ENCODE measurements at regions of chrX and their contacts with region 1.

Region 1: GRCh38 chrX:130339408-130340222 is at the start of gene SLC25A14:
- DNase-seq: peak; percentile 85
- H3K4me3 ChIP-seq: peak within 1 kb of the TSS; percentile 34 to 74 (median 62)
- H3K27ac ChIP-seq: peak within 1 kb of the TSS; percentile 14 to 70 (median 62)
- H3K4me1 ChIP-seq: no peaks in the 10 kb centered on the region
- H3K27me3 ChIP-seq: no peaks in the 10 kb centered on the region
- CTCF ChIP-seq: no peak
- EP300 ChIP-seq: no peak
- POLR2A ChIP-seq: no peak
- total RNA-seq, gene SLC25A14: 8.6 to 16.8 (median 11.6) TPM

Region 2: GRCh38 chrX:130268500-130269170 is 71.0 kb before region 1 on chrX and contains the start of gene ZNF280C:
- intact Hi-C with region 1: loop called (anchors 5 kb)
- DNase-seq: peak; percentile 94
- H3K4me3 ChIP-seq: peak within 1 kb of the TSS; percentile 38 to 67 (median 61)
- H3K27ac ChIP-seq: peak within 1 kb of the TSS; percentile 76 to 85 (median 82)
- H3K4me1 ChIP-seq: peaks cover 0 to 8% (median 3%) of the 10 kb centered on the region in 4 donors
- H3K27me3 ChIP-seq: no peaks in the 10 kb centered on the region
- CTCF ChIP-seq: no peak
- EP300 ChIP-seq: no peak
- POLR2A ChIP-seq: peak; percentile 45 to 55
- total RNA-seq, gene ZNF280C: 5.3 to 6.4 (median 5.7) TPM

Region 3: GRCh38 chrX:130393451-130394074 is 53.9 kb after region 1 on chrX:
- intact Hi-C with region 1: no loop called
- DNase-seq: no peak
- H3K4me3 ChIP-seq: no peak overlapping the region
- H3K27ac ChIP-seq: no peak overlapping the region
- H3K4me1 ChIP-seq: no peaks in the 10 kb centered on the region
- H3K27me3 ChIP-seq: peaks cover 0 to 3% (median 0%) of the 10 kb centered on the region in 3 donors
- CTCF ChIP-seq: peak in 2 of 4 experiments; percentile 21 to 49
- EP300 ChIP-seq: no peak
- POLR2A ChIP-seq: no peak

Measured in sigmoid colon (tissue), 7 donors.